IMR-90 (cell line): ENCODE measurements at regions of chr10 and their contacts with region 1.

Region 1: DNA sequence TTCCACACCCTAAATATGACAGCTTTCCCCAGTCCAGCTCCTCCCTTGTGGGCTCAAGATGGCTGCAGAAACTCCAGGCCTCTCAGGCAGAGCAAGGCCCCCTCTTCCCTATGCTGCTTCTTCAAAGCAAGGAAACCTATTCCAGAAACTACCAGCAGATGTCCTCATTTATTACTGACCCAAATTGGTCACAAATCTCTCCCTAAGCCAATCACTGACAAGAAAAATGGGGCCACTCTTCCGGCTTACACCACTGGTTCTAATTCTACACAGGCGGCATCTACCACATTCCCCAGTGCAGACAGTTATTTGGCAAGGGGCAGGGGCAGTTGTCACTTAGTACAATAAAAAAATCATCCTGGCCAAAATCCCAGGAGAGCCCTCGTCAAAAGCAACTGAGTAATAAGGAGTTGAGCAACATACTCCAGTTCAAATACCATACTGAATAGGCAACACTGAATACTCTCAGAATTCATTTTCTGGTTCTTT is 150.4 kb downstream of the SFMBT2 start:
- DNase-seq: peak; percentile 86
- ATAC-seq: peak; percentile 82
- H3K4me3 ChIP-seq: no peak overlapping the region
- H3K27ac ChIP-seq: peak overlapping the region; percentile 46; the same call in 1 of the 2 replicates
- H3K4me1 ChIP-seq: peaks cover 6% of the 10 kb centered on the region; the same call in 1 of the 2 replicates
- H3K27me3 ChIP-seq: no peaks in the 10 kb centered on the region
- CTCF ChIP-seq: peak; percentile 43
- POLR2A ChIP-seq: no peak
- RAD21 ChIP-seq: peak; percentile 25

Region 2: DNA sequence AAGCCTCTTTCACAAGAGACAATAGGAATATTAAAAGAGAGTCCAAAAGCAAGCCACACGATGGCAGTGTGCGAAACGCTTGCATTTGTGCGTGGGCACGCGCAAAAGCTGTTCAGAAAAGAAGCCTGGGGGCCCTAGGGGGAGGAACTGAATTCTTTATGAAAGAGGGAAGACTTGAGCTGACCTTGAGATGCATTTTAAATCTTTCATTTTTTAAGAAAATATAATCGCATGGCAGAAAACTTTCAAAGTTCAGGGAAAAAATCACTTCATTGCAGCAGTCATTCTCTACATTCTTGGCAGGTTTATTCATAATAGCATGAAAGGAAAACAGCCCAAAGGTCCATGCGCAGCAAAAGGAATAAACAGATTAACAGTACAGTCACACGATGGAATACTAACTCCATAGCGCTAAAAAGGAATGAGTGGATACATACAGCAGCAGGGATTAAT is 473.9 kb before region 1 on chr10:
- CTCF ChIA-PET with region 1: no interaction called
- POLR2A ChIA-PET with region 1: no interaction called
- dilution Hi-C with region 1: no loop called
- in situ Hi-C with region 1: no loop called
- intact Hi-C with region 1: loop called (anchors 10 kb)
- DNase-seq: peak; percentile 79
- ATAC-seq: peak; percentile 92
- H3K4me3 ChIP-seq: peak overlapping the region; percentile 9; the same call in 1 of the 2 replicates
- H3K27ac ChIP-seq: peak overlapping the region; percentile 63
- H3K4me1 ChIP-seq: peaks cover 7% of the 10 kb centered on the region
- H3K27me3 ChIP-seq: no peaks in the 10 kb centered on the region
- CTCF ChIP-seq: peak; percentile 63
- POLR2A ChIP-seq: no peak
- RAD21 ChIP-seq: peak; percentile 61

Region 3: GRCh38 chr10:7153750-7154149 is 106.7 kb before region 1 on chr10:
- CTCF ChIA-PET with region 1: no interaction called
- POLR2A ChIA-PET with region 1: no interaction called
- dilution Hi-C with region 1: no loop called
- in situ Hi-C with region 1: no loop called
- intact Hi-C with region 1: no loop called
- DNase-seq: peak; percentile 13
- ATAC-seq: no peak
- H3K4me3 ChIP-seq: no peak overlapping the region
- H3K27ac ChIP-seq: no peak overlapping the region
- H3K4me1 ChIP-seq: no peaks in the 10 kb centered on the region
- H3K27me3 ChIP-seq: no peaks in the 10 kb centered on the region
- CTCF ChIP-seq: no peak
- POLR2A ChIP-seq: no peak
- RAD21 ChIP-seq: no peak

Region 4: DNA sequence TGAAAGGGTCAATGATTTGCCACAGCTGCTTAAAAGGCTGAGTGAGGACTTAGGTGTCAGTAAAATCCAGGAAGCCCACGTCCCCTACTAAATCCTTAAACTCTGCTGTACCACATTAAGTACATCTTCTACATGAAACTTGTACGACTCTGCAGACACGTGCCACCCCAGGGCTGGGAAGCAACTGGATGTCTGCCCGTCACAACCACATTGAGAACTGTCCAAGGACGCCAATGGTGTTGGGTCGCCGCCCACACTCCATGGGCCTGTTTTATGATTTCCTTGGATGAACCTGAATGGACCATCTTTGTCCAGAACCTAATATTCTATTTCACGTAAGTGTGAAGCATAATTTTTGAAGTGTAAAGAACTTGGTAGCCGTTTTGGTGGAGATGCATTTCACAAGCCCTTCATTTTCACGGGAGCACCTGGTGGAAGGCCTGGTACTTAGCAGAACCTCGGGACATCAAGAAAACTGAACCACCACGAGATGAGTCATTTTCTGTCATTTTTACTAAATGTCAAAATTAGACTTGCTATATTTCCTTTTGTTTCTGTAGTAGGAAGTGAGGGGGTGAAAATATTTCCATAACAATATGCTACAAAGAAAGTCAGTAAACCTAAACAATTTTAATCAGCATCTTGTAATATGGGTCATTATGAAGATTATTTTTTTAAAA is 15.4 kb after region 1 on chr10:
- CTCF ChIA-PET with region 1: no interaction called
- POLR2A ChIA-PET with region 1: no interaction called
- dilution Hi-C with region 1: no loop called
- in situ Hi-C with region 1: no loop called
- intact Hi-C with region 1: no loop called
- DNase-seq: no peak
- ATAC-seq: no peak
- H3K4me3 ChIP-seq: no peak overlapping the region
- H3K27ac ChIP-seq: no peak overlapping the region
- H3K4me1 ChIP-seq: no peaks in the 10 kb centered on the region
- H3K27me3 ChIP-seq: no peaks in the 10 kb centered on the region
- CTCF ChIP-seq: no peak
- POLR2A ChIP-seq: no peak
- RAD21 ChIP-seq: no peak